Tibial artery (tissue), 4 donors: ENCODE measurements at regions of chr15 and their contacts with region 1.

Region 1: DNA sequence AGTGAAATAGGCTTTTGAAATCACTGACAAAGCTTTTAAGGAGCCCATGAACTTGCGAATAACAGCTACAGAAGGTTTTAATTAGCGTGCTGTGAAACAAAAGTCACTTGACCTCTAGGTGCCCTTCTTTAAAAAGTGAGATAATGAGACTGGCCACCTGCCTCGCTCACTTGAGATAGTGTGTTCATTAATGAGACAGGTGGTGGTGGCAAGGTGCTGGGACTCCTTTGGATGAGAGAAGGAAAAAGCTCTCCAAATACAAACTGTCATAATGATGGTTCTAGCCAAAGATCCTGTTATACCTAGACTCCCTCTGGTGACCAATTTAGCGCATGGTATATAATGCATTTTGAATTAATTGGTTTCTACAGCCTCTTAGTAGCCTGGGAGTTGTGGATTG is 22.7 kb upstream of the IREB2 start:
- DNase-seq: no peak
- H3K4me3 ChIP-seq: no peak overlapping the region
- H3K27ac ChIP-seq: no peak overlapping the region
- H3K4me1 ChIP-seq: no peaks in the 10 kb centered on the region
- H3K27me3 ChIP-seq: peaks cover 0 to 28% of the 10 kb centered on the region in 2 donors
- CTCF ChIP-seq: no peak

Region 2: DNA sequence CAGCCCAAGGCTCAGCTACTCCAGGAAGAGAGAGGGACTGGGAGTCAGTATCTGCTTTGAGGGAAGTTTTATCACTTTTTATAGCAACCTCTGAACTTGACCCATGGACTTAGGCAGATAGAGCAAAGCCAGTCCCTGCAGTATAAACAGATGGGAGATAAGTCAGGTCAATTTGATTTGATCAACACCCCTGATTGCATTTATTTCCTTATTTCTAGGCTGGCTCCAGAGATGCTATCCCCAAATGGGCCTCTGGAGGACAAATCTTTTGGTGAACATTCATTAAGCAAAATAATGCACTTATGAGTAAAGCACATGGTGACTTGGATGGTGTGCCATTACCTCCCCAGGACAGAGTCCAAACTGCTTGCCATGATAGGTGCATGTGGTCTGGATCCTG is 275.0 kb before region 1 on chr15:
- intact Hi-C with region 1: no loop called
- DNase-seq: no peak
- H3K4me3 ChIP-seq: no peak overlapping the region
- H3K27ac ChIP-seq: no peak overlapping the region
- H3K4me1 ChIP-seq: no peaks in the 10 kb centered on the region
- H3K27me3 ChIP-seq: no peaks in the 10 kb centered on the region
- CTCF ChIP-seq: no peak

Region 3: GRCh38 chr15:78193731-78194567 is 221.3 kb before region 1 on chr15:
- intact Hi-C with region 1: no loop called
- DNase-seq: no peak
- H3K4me3 ChIP-seq: no peak overlapping the region
- H3K27ac ChIP-seq: no peak overlapping the region
- H3K4me1 ChIP-seq: no peaks in the 10 kb centered on the region
- H3K27me3 ChIP-seq: no peaks in the 10 kb centered on the region
- CTCF ChIP-seq: no peak

Region 4: DNA sequence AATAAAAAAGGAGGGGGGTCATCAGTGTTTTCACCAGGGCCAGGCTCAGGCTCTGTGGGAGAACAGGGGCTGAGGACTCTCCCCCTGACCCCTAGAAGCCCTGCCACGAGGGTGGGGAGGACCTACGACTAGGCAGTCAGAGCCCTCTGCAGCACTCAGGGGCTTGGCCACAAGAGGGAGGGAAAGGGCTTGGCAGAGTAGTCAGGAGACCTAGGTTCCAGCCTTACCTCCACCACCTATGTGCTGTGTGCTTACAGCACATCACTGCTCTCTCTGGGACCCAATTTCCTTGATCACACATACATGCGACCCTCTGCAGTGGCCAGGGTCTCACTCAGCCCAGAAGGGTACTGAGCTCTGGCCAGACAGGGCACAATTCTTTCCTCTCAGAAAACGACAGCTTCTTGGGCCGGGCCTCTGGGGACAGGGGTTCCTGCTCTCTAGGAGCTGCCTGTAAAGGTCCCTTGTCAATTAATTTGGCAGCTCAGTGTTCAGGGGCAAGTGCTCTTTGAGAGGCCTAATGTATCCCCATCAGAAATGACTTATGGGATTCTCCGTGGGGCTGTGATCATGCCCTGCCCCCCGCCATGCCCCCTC is 99.5 kb before region 1 on chr15:
- intact Hi-C with region 1: loop called (anchors 10 kb)
- DNase-seq: no peak
- H3K4me3 ChIP-seq: no peak overlapping the region
- H3K27ac ChIP-seq: no peak overlapping the region
- H3K4me1 ChIP-seq: no peaks in the 10 kb centered on the region
- H3K27me3 ChIP-seq: peaks cover 0 to 35% of the 10 kb centered on the region in 2 donors
- CTCF ChIP-seq: no peak